ENCODE measurements at regions of chr2 and their contacts with region 1.

Region 1: GRCh38 chr2:197399887-197400540 is 34.8 kb downstream of the SF3B1 start:
- DNase-seq: no peak
- ATAC-seq: no peak
- H3K4me3 ChIP-seq: no peak overlapping the region
- H3K4me3 Mint-ChIP-seq: no peak overlapping the region
- H3K27ac ChIP-seq: no peak overlapping the region
- H3K27ac Mint-ChIP-seq: no peak overlapping the region
- H3K4me1 ChIP-seq: no peaks in the 10 kb centered on the region
- H3K4me1 Mint-ChIP-seq: no peaks in the 10 kb centered on the region
- H3K27me3 ChIP-seq: no peaks in the 10 kb centered on the region
- H3K27me3 Mint-ChIP-seq: no peaks in the 10 kb centered on the region
- CTCF ChIP-seq: no peak

Region 2: GRCh38 chr2:196592912-196593881 is 806.8 kb before region 1 on chr2:
- CTCF ChIA-PET with region 1: no interaction called
- POLR2A ChIA-PET with region 1: no interaction called
- intact Hi-C with region 1: no loop called
- DNase-seq: peak in 1 of 9 experiments; percentile 3
- ATAC-seq: no peak
- H3K4me3 ChIP-seq: no peak within 1 kb of the TSS
- H3K4me3 Mint-ChIP-seq: peak within 1 kb of the TSS; percentile 83
- H3K27ac ChIP-seq: no peak within 1 kb of the TSS
- H3K27ac Mint-ChIP-seq: no peak within 1 kb of the TSS
- H3K4me1 ChIP-seq: peaks cover 3% of the 10 kb centered on the region
- H3K4me1 Mint-ChIP-seq: peaks cover 13% of the 10 kb centered on the region
- H3K27me3 ChIP-seq: peaks cover 0 to 5% of the 10 kb centered on the region in 2 experiments
- H3K27me3 Mint-ChIP-seq: peaks cover 63% of the 10 kb centered on the region
- CTCF ChIP-seq: no peak

Region 3: GRCh38 chr2:196767101-196767500 is 632.9 kb before region 1 on chr2:
- CTCF ChIA-PET with region 1: no interaction called
- POLR2A ChIA-PET with region 1: no interaction called
- intact Hi-C with region 1: loop called in 1 of 2 experiments (anchors 5 kb)
- DNase-seq: no peak
- ATAC-seq: no peak
- H3K4me3 ChIP-seq: no peak overlapping the region
- H3K4me3 Mint-ChIP-seq: no peak overlapping the region
- H3K27ac ChIP-seq: no peak overlapping the region
- H3K27ac Mint-ChIP-seq: no peak overlapping the region
- H3K4me1 ChIP-seq: no peaks in the 10 kb centered on the region
- H3K4me1 Mint-ChIP-seq: no peaks in the 10 kb centered on the region
- H3K27me3 ChIP-seq: no peaks in the 10 kb centered on the region
- H3K27me3 Mint-ChIP-seq: no peaks in the 10 kb centered on the region
- CTCF ChIP-seq: no peak

Region 4: GRCh38 chr2:197416268-197416667 is 16.3 kb after region 1 on chr2:
- CTCF ChIA-PET with region 1: no interaction called
- POLR2A ChIA-PET with region 1: interaction called, 3 read pairs
- intact Hi-C with region 1: loop called in 1 of 2 experiments (anchors 2 kb)
- DNase-seq: no peak
- ATAC-seq: no peak
- H3K4me3 ChIP-seq: no peak overlapping the region
- H3K4me3 Mint-ChIP-seq: no peak overlapping the region
- H3K27ac ChIP-seq: no peak overlapping the region
- H3K27ac Mint-ChIP-seq: no peak overlapping the region
- H3K4me1 ChIP-seq: no peaks in the 10 kb centered on the region
- H3K4me1 Mint-ChIP-seq: peaks cover 21% of the 10 kb centered on the region
- H3K27me3 ChIP-seq: no peaks in the 10 kb centered on the region
- H3K27me3 Mint-ChIP-seq: no peaks in the 10 kb centered on the region
- CTCF ChIP-seq: no peak

Region 5: GRCh38 chr2:197426723-197427603 is 26.9 kb after region 1 on chr2:
- CTCF ChIA-PET with region 1: no interaction called
- POLR2A ChIA-PET with region 1: no interaction called
- intact Hi-C with region 1: no loop called
- DNase-seq: no peak
- ATAC-seq: no peak
- H3K4me3 ChIP-seq: no peak overlapping the region
- H3K4me3 Mint-ChIP-seq: peak overlapping the region; percentile 11
- H3K27ac ChIP-seq: peak overlapping the region in 1 of 2 experiments; percentile 32
- H3K27ac Mint-ChIP-seq: peak overlapping the region; percentile 37
- H3K4me1 ChIP-seq: peaks cover 76% of the 10 kb centered on the region
- H3K4me1 Mint-ChIP-seq: peaks cover 80% of the 10 kb centered on the region
- H3K27me3 ChIP-seq: no peaks in the 10 kb centered on the region
- H3K27me3 Mint-ChIP-seq: no peaks in the 10 kb centered on the region
- CTCF ChIP-seq: no peak

Region 6: DNA sequence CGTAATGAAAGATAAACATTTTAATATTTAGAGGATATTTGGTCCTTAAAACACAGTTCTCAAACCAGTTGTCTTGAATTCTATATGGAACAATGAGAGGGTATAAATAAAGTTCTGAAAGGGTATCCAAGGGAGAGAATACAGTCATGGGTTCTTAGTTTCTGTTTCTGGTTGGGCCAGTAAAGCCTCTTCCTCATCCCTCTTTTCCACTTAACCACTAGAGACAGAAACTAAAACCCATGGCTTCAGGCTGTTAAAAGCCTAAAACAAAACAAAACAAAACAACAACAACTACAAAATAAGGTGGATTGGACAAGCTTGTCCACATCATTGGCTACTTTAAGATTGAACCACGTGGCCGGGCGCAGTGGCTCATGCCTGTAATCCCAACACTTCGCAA is 72.2 kb after region 1 on chr2:
- CTCF ChIA-PET with region 1: no interaction called
- POLR2A ChIA-PET with region 1: no interaction called
- intact Hi-C with region 1: loop called in 1 of 2 experiments (anchors 5 kb)
- DNase-seq: no peak
- ATAC-seq: no peak
- H3K4me3 ChIP-seq: no peak overlapping the region
- H3K4me3 Mint-ChIP-seq: no peak overlapping the region
- H3K27ac ChIP-seq: no peak overlapping the region
- H3K27ac Mint-ChIP-seq: no peak overlapping the region
- H3K4me1 ChIP-seq: no peaks in the 10 kb centered on the region
- H3K4me1 Mint-ChIP-seq: peaks cover 4% of the 10 kb centered on the region
- H3K27me3 ChIP-seq: no peaks in the 10 kb centered on the region
- H3K27me3 Mint-ChIP-seq: no peaks in the 10 kb centered on the region
- CTCF ChIP-seq: no peak

Region 7: GRCh38 chr2:197556456-197556855 is 156.4 kb after region 1 on chr2:
- CTCF ChIA-PET with region 1: no interaction called
- POLR2A ChIA-PET with region 1: no interaction called
- intact Hi-C with region 1: no loop called
- DNase-seq: no peak
- ATAC-seq: no peak
- H3K4me3 ChIP-seq: no peak overlapping the region
- H3K4me3 Mint-ChIP-seq: no peak overlapping the region
- H3K27ac ChIP-seq: peak overlapping the region in 1 of 2 experiments; percentile 3
- H3K27ac Mint-ChIP-seq: peak overlapping the region; percentile 55
- H3K4me1 ChIP-seq: no peaks in the 10 kb centered on the region
- H3K4me1 Mint-ChIP-seq: peaks cover 7% of the 10 kb centered on the region
- H3K27me3 ChIP-seq: no peaks in the 10 kb centered on the region
- H3K27me3 Mint-ChIP-seq: no peaks in the 10 kb centered on the region
- CTCF ChIP-seq: no peak

Measured in CD8-positive, alpha-beta T cell (primary cell).